Activated CD4-positive, alpha-beta T cell treated with anti-CD3 and anti-CD28 coated beads for 36 hours (primary cell): ENCODE measurements at regions of chr2 and their contacts with region 1.

Region 1: GRCh38 chr2:69581774-69582581 is 61.6 kb downstream of the AAK1 start:
- DNase-seq: peak; percentile 21
- ATAC-seq: no peak
- H3K4me3 Mint-ChIP-seq: peak overlapping the region; percentile 52
- H3K27ac Mint-ChIP-seq: peak overlapping the region; percentile 78
- H3K4me1 Mint-ChIP-seq: peaks cover 90% of the 10 kb centered on the region
- H3K27me3 Mint-ChIP-seq: no peaks in the 10 kb centered on the region

Region 2: DNA sequence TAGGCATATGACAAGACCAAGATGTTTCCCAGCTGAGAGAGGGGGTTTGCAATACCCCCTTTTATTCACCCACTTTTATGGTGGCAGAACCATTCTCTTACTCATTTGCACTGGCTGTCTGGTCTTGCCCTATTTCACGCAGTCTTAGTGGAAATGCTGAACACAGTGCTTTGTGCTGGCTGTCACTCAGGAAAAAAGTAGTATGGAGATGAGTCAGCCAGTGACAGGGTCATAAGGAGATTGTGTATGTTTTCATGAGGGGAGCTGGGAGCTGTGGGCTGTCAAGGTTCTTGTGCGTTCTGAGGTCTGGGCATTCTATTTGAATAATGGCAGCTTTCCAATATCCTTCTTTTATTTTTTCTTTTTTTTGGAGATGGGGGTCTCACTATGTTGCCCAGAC is 1251.3 kb before region 1 on chr2:
- CTCF ChIA-PET with region 1: no interaction called
- POLR2A ChIA-PET with region 1: no interaction called
- intact Hi-C with region 1: no loop called
- DNase-seq: no peak
- ATAC-seq: peak; percentile 73
- H3K4me3 Mint-ChIP-seq: no peak overlapping the region
- H3K27ac Mint-ChIP-seq: no peak overlapping the region
- H3K4me1 Mint-ChIP-seq: no peaks in the 10 kb centered on the region
- H3K27me3 Mint-ChIP-seq: peaks cover 26% of the 10 kb centered on the region

Region 3: DNA sequence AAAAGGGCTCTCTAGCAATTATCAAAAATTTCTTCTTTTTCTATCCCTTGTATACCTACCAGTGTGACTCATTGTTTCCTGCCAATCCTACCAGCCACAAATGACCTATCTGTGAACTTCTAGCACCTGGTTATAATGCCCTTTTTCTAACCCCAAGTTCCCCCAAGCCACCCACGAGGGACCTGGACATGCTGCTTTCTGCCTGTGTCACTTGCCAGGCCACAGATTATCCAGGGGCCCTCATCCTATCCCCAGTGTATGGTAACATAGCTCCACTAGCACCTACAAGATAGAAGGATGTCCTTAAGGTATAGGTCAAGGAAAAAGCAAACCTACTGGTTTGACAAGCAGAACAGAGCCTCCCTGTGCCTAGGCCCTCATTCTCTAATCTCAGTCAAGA is 34.8 kb after region 1 on chr2:
- CTCF ChIA-PET with region 1: interaction called, 6 read pairs
- POLR2A ChIA-PET with region 1: no interaction called
- intact Hi-C with region 1: loop called in 1 of 2 experiments (anchors 5 kb)
- DNase-seq: peak; percentile 65
- ATAC-seq: peak; percentile 30
- H3K4me3 Mint-ChIP-seq: peak overlapping the region; percentile 11
- H3K27ac Mint-ChIP-seq: peak overlapping the region; percentile 73
- H3K4me1 Mint-ChIP-seq: peaks cover 41% of the 10 kb centered on the region
- H3K27me3 Mint-ChIP-seq: no peaks in the 10 kb centered on the region